Sigmoid colon (tissue), 7 donors: ENCODE measurements at regions of chr19 and their contacts with region 1.

Region 1: DNA sequence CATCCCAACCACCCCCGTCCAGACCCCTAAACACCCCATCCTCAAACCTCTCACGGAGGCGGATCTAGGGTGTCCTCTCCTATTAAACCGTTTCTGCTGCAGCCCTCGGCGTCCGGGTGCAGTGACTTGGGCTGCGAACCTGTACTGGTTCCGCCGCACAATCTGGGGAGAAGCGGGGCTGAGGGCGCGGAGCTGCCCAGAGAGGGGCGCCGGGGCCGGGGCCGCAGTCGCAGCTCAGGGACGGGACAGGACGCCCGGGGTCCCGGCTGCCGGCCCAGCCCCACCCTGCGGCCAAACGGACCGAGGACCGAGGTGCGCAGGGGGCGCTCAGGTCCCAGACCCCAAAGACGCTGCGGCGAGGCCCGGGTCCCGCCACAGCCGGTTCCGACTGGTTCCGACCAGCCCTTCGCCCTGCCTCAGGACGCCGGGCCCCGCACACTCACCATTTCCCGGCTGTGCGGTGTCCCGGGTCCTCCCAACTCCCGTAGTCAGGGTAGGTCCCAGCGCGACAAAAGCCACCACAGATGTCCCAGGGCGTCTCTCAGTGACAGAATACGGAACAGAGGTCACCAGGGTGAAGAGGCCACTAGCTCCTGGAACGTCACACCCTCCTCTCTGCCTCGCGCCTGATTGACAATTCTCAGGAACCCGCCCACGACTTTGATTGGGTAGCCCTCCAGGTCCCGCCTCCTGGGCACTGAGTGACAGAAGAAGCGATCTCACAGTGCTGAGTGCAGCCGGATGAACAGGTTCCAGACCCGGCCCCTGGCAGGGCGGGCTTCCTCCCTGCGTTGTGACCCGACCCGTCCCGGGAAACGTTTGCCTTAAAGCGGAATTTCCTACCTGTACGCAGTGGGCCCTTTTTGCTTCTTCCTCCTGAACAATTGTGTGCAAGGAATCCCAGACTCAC is at the start of gene ZNF44:
- DNase-seq: peak; percentile 99
- H3K4me3 ChIP-seq: peak within 1 kb of the TSS; percentile 89 to 99 (median 93)
- H3K27ac ChIP-seq: peak within 1 kb of the TSS; percentile 94 to 98 (median 95)
- H3K4me1 ChIP-seq: peaks cover 0 to 41% (median 21%) of the 10 kb centered on the region in 4 donors
- H3K27me3 ChIP-seq: no peaks in the 10 kb centered on the region
- CTCF ChIP-seq: no peak
- EP300 ChIP-seq: no peak
- POLR2A ChIP-seq: peak; percentile 58 to 85
- total RNA-seq, gene ZNF44: 6.4 to 16.3 (median 11.2) TPM

Region 2: DNA sequence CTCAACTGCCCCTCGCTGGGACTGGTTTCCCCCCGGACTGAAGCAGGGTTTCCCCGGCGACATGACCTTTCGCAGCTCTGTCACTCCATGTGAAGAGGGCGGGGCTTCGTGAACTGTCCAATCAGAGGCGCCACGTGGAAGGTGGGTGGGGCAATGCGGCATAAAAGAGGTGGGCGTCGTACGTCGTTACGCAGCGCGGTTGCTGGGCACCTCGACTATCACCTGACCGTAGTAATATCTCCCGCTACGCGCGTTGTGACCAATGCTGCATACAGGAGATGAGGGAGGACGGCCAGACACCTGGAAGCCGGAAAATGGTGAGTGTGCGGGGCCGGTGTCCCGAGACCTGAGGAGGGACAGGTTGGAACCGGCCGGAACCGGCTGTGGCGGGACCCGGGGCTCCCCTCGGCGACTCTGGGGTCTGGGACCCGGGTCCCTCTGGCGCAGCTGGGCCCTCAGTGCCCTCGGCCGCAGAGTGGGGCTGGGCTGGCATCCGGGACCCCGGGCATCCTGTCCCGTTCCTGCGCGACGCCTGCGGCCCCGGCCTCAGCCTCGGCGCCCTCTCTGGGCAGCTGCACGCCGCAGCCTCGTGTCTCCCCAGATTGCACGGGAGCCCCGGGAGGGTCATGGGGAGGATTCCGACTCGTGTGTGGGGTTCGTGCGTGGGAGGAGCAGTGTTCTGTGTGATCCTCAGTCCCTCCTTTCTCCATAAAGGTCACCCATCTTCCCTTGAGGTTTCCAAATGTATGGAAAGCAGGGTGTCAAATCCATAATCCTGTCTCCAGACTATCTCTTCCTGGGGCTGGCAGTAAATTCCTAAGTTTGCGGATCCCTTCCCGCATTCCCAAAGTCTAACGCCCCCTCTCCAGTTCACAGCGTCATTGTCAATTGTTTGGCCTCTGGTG is 99.4 kb before region 1 on chr19:
- intact Hi-C with region 1: loop called (anchors 10 kb)
- DNase-seq: peak; percentile 94
- H3K4me3 ChIP-seq: peak overlapping the region; percentile 68 to 81 (median 72)
- H3K27ac ChIP-seq: peak overlapping the region; percentile 84 to 86 (median 84)
- H3K4me1 ChIP-seq: peaks cover 0 to 17% (median 9%) of the 10 kb centered on the region in 4 donors
- H3K27me3 ChIP-seq: no peaks in the 10 kb centered on the region
- CTCF ChIP-seq: no peak
- EP300 ChIP-seq: peak in 2 of 4 donors; percentile 7 to 37
- POLR2A ChIP-seq: peak in 1 of 2 donors; percentile 12

Region 3: DNA sequence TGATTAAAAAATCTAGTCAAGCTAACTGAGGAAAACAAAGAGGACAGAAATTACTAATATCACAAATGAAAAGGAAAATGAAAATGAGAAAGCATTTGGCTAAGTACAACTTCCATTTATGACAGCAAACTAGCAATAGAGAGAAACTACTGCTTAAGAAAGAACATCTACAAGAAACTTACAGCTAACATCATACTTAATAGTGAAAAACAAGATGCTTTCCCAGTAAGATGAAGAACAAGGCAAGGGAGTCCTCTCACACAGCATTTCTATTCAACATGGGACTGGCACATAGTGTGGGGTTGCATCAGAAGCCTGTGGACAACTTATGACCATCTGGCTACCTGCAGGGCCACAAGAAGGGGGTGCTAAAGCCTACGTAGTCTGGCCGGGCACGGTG is 39.1 kb before region 1 on chr19:
- intact Hi-C with region 1: no loop called
- DNase-seq: no peak
- H3K4me3 ChIP-seq: no peak overlapping the region
- H3K27ac ChIP-seq: no peak overlapping the region
- H3K4me1 ChIP-seq: no peaks in the 10 kb centered on the region
- H3K27me3 ChIP-seq: no peaks in the 10 kb centered on the region
- CTCF ChIP-seq: no peak
- EP300 ChIP-seq: no peak
- POLR2A ChIP-seq: no peak

Region 4: DNA sequence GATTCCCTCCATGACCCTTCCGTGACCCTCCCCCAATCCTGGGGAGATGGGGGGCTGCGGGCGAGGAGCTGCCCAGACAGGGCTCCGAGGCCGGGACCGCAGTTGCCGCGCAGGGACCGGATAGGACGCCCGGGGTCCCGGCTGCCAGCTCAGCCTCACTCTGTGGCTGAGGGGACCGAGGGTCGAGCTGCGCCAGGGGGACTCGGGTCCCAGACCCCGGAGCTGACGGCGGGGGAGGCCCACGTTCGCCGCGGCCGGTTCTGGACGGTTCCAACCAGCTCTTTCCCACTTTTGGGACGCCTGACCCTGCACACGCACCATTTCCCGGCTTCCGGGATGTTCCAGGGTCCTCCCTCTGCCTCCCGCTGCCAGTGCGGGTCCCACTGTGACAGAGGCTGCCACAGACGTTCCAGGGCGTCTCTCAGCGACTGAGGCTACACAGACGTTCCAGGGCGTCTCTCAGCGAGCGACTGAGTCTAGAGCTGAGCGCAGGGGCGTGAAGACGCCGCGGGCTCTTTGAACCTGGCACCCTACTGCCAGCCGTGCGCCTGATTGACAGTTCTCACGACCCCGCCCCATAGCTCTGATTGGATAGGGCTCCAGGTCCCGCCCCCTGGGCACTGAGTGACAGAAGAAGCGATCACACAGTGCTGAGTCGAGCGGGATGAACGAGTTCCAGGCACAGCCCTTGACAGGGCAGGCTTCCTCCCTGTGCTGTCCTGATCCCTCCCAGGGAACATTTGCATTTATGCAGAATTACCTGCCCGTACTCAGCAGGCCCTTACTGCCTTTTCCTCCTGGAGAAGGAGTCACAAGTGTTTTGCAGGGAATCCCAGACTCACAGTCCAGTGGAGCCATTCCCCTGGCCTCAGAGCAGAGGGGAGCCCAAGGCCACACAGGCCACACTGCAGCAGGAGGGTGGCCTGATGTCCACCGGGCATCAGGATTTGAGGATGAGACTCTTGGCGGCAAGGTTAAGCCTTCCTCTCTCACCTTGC is 39.0 kb after region 1 on chr19 and contains the start of gene ZNF563:
- intact Hi-C with region 1: loop called (anchors 2 kb)
- DNase-seq: peak; percentile 99
- H3K4me3 ChIP-seq: peak within 1 kb of the TSS; percentile 71 to 87 (median 77)
- H3K27ac ChIP-seq: peak within 1 kb of the TSS; percentile 89 to 97 (median 93)
- H3K4me1 ChIP-seq: peaks cover 0 to 12% (median 11%) of the 10 kb centered on the region in 4 donors
- H3K27me3 ChIP-seq: no peaks in the 10 kb centered on the region
- CTCF ChIP-seq: no peak
- EP300 ChIP-seq: no peak
- POLR2A ChIP-seq: peak; percentile 75 to 90
- total RNA-seq, gene ZNF563: 2.5 to 6.6 (median 4.3) TPM